ENCODE measurements at regions of chr1 and their contacts with region 1.

Region 1: GRCh38 chr1:205061665-205062069 is 18.7 kb downstream of the CNTN2 start:
- DNase-seq: peak; percentile 84
- H3K4me3 ChIP-seq: no peak overlapping the region
- H3K27ac ChIP-seq: no peak overlapping the region
- H3K4me1 ChIP-seq: peaks cover 0 to 9% (median 6%) of the 10 kb centered on the region in 6 donors
- H3K27me3 ChIP-seq: no peaks in the 10 kb centered on the region
- CTCF ChIP-seq: peak; percentile 47 to 88 (median 77)
- POLR2A ChIP-seq: no peak

Region 2: DNA sequence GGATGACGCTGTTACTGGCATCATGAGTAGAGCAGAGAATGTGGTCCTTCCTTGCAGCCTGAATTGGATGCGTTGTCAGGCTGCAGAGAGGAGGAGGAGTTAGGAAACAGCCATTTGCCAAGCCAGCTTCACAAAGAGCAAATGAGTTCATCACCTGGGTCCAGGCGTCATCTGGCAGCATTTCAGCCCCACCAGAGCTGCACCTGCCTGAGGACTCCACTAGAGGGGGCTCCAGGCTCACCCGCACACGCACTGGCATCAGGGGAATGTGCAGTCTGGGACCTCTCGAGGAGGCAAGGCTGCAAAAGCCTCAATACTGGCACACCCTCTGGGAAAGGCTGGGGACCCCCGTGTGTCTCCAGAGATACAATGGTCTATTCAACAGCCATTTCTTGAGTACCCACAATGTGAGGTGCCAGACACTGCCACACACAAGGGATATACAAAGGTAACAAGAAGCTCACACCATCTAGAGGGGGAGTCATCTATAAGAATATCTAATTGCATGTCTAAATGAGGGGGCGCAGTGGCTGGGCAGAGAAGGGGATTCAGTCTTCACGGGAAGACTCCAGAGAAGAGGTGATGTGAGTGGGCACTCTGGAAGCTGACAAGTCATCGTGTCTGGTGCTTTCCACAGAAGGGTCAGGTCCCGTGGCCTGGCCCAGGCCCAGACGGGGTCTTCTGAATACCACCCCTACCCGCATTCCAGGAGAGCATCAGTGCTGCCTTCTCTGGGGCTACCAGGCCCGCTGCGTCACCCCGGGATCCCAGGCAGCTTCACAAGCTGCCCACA is 72.2 kb before region 1 on chr1:
- intact Hi-C with region 1: loop called (anchors 5 kb)
- DNase-seq: peak; percentile 89
- H3K4me3 ChIP-seq: no peak overlapping the region
- H3K27ac ChIP-seq: no peak overlapping the region
- H3K4me1 ChIP-seq: peaks cover 0 to 31% (median 7%) of the 10 kb centered on the region in 6 donors
- H3K27me3 ChIP-seq: peaks cover 0 to 11% (median 0%) of the 10 kb centered on the region in 7 donors
- CTCF ChIP-seq: peak; percentile 75 to 95 (median 87)
- POLR2A ChIP-seq: no peak